Activated CD8-positive, alpha-beta T cell treated with anti-CD3 and anti-CD28 coated beads for 36 hours (primary cell): ENCODE measurements at regions of chr2 and their contacts with region 1.

Region 1: DNA sequence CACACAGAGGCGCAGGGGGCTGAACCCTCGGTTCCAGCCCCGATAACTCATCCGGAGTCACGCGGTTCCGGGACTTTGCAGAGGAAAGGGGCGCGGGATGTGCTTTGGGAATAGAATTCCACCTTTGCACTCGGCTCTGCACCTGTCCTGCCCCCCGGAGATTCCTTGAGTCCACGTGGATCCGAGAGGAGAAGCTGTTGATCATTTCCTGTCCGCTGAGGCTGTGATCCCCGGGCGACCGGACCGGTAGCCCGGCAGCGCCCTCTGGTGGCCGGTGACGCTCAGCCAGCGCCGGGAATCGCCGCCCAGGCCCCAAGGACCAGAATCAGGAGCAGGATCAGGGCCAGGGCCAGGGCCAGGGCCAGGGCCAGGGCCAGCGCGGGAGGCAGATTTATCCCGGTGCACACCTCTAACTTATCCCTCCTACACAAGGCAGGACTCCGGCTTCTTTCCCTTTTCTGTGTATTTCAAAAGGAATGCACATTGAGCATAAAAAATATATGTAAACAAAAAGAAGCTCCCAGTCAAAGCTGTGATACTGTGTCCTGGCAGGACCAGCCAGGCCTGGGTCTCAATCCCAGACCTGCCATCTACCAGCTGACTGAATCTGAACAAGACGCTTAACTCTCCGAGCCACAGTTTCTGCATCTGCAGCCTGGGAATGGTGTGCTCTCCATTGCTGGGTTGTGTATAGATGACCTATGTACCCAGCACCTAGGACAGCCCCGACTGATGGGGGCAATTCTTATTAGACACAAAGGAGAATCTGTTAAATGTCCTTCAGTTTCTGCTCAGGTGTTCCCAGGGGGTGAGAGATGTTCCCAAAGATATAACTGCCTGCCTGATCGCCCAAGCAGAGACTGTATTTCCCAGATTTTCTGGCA is 8.5 kb upstream of the SPATA3 start:
- DNase-seq: peak; percentile 81
- ATAC-seq: peak; percentile 35
- H3K4me3 Mint-ChIP-seq: peak overlapping the region; percentile 67
- H3K27ac Mint-ChIP-seq: peak overlapping the region; percentile 71
- H3K4me1 Mint-ChIP-seq: peaks cover 40% of the 10 kb centered on the region
- H3K27me3 Mint-ChIP-seq: peaks cover 18% of the 10 kb centered on the region
- CTCF ChIP-seq: peak; percentile 97

Region 2: GRCh38 chr2:230840301-230840700 is 147.1 kb before region 1 on chr2:
- CTCF ChIA-PET with region 1: interaction called, 11 read pairs
- POLR2A ChIA-PET with region 1: no interaction called
- intact Hi-C with region 1: loop called (anchors 5 kb)
- DNase-seq: no peak
- ATAC-seq: no peak
- H3K4me3 Mint-ChIP-seq: no peak overlapping the region
- H3K27ac Mint-ChIP-seq: no peak overlapping the region
- H3K4me1 Mint-ChIP-seq: peaks cover 4% of the 10 kb centered on the region
- H3K27me3 Mint-ChIP-seq: peaks cover 3% of the 10 kb centered on the region
- CTCF ChIP-seq: no peak

Region 3: DNA sequence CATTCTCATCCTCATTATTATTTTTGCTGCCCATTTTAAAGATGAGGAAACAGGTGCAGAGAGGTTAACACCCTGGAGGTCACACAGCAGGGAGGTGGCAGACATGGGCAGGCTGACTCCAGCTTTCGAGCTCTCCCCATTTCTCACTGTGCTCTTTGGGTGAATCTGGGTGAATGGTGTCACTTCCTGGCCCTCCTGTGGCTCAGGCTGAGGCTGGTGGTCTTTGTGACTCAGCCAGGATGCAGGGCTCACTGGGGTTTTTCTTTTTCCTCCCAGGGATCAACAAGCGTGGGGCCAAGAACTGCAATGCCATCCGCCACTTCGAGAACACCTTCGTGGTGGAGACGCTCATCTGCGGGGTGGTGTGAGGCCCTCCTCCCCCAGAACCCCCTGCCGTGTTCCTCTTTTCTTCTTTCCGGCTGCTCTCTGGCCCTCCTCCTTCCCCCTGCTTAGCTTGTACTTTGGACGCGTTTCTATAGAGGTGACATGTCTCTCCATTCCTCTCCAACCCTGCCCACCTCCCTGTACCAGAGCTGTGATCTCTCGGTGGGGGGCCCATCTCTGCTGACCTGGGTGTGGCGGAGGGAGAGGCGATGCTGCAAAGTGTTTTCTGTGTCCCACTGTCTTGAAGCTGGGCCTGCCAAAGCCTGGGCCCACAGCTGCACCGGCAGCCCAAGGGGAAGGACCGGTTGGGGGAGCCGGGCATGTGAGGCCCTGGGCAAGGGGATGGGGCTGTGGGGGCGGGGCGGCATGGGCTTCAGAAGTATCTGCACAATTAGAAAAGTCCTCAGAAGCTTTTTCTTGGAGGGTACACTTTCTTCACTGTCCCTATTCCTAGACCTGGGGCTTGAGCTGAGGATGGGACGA is 109.4 kb before region 1 on chr2:
- CTCF ChIA-PET with region 1: interaction called, 21 read pairs
- POLR2A ChIA-PET with region 1: interaction called, 3 read pairs
- intact Hi-C with region 1: no loop called
- DNase-seq: peak; percentile 88
- ATAC-seq: peak; percentile 90
- H3K4me3 Mint-ChIP-seq: peak overlapping the region; percentile 33
- H3K27ac Mint-ChIP-seq: peak overlapping the region; percentile 92
- H3K4me1 Mint-ChIP-seq: peaks cover 52% of the 10 kb centered on the region
- H3K27me3 Mint-ChIP-seq: no peaks in the 10 kb centered on the region
- CTCF ChIP-seq: no peak

Region 4: DNA sequence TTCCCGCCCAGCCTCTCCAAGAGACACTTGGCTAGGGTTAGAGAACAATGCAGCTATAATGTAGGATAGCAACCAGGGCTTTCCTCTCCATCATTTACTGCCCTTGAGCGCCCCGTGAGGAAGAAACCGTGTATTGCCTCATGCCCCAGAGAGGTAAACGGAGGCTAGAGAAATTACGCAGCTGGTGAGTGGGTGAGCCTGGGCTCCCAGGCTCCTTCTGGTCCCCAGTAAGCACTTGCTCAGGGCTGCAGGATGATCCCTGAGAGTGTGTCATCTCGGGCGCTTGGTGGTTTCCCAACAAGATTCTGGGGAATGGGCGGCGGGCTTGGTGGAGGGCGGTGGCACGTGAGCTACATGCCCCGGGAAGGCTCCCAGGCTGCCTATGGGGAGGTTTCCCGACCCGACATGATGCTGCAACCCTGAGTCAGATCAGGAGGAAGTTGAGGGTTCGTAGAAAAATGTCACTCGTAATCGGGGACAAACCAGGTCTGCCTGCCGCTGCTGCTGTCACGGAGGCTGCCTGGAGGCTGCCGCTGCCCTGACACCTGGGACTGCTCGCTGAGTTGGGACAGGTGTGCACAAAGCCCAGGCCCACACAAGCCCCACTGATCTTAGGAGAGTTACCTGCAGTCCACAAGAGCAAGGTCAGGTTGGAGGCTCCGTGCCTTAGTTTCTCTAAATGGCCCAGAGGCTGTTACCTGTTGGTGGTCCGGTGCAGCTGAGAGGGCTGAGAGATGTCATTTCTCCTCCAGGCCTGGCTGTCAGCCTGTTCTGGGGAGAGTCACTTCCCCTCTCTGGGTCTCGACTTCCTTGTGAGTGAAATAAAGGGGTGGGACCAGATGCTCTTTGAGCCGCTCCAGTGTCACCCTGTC is 62.7 kb before region 1 on chr2 and contains the start of gene GPR55:
- CTCF ChIA-PET with region 1: interaction called, 181 read pairs
- POLR2A ChIA-PET with region 1: interaction called, 86 read pairs
- intact Hi-C with region 1: loop called (anchors 2 kb)
- DNase-seq: peak; percentile 89
- ATAC-seq: peak; percentile 57
- H3K4me3 Mint-ChIP-seq: peak within 1 kb of the TSS; percentile 74
- H3K27ac Mint-ChIP-seq: peak within 1 kb of the TSS; percentile 98
- H3K4me1 Mint-ChIP-seq: peaks cover 73% of the 10 kb centered on the region
- H3K27me3 Mint-ChIP-seq: no peaks in the 10 kb centered on the region
- CTCF ChIP-seq: peak; percentile 47
- total RNA-seq, gene GPR55: 5.0 to 5.3 TPM

Region 5: DNA sequence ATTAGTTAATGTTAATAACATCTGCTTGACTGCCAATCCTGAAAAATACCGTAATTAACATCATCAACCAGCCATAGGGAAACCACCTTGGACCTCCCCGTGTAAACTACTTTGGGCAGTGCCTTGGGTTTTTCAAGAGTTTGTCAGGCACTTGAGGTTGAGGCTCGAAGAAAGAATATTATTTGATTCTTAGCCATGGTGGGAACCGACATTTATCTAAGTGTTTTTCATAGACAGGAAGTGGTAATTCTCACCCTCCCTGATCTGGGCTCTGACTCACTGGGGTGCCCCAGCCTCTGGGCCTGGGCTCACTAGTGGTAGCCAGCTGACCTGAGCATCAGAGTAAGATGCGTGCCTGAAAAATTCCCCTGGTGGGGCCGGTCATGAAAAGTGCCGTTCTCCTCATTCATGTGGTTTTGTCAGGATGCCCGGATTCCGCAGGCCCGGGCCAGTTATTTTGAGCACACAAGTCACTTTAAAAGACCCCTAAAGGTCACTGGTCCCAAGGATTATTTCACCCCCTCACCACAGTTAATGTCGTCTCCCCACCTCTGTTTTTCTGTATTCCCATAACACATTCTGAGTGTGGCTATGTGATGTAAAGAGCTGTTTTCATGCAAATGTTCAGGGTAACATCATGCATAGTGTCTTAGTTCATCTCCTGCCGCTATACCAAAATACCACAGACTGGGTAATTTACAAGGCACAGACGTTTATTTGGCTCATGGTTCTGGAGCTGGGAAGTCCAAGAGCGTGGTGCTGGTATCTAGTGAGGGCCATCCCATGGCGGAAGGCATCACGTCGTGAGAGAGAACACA is 13.1 kb before region 1 on chr2:
- CTCF ChIA-PET with region 1: interaction called, 14 read pairs
- POLR2A ChIA-PET with region 1: interaction called, 35 read pairs
- intact Hi-C with region 1: no loop called
- DNase-seq: peak; percentile 95
- ATAC-seq: peak; percentile 91
- H3K4me3 Mint-ChIP-seq: peak overlapping the region; percentile 50
- H3K27ac Mint-ChIP-seq: peak overlapping the region; percentile 90
- H3K4me1 Mint-ChIP-seq: peaks cover 70% of the 10 kb centered on the region
- H3K27me3 Mint-ChIP-seq: no peaks in the 10 kb centered on the region
- CTCF ChIP-seq: no peak

Region 6: GRCh38 chr2:231056453-231057424 is 69.4 kb after region 1 on chr2 and contains the start of gene PSMD1:
- CTCF ChIA-PET with region 1: interaction called, 11 read pairs
- POLR2A ChIA-PET with region 1: no interaction called
- intact Hi-C with region 1: no loop called
- DNase-seq: peak; percentile 96
- ATAC-seq: peak; percentile 86
- H3K4me3 Mint-ChIP-seq: peak within 1 kb of the TSS; percentile 81
- H3K27ac Mint-ChIP-seq: peak within 1 kb of the TSS; percentile 100
- H3K4me1 Mint-ChIP-seq: peaks cover 48% of the 10 kb centered on the region
- H3K27me3 Mint-ChIP-seq: peaks cover 4% of the 10 kb centered on the region
- CTCF ChIP-seq: peak; percentile 93
- total RNA-seq, gene PSMD1: 106 to 114 TPM